Activated naive CD4-positive, alpha-beta T cell treated with anti-CD3 and anti-CD28 coated beads, Interleukin-2, amount 10 ng/mL, durations not matched to agents 7 days and 5 days (primary cell): ENCODE measurements at regions of chr3 and their contacts with region 1.

Region 1: DNA sequence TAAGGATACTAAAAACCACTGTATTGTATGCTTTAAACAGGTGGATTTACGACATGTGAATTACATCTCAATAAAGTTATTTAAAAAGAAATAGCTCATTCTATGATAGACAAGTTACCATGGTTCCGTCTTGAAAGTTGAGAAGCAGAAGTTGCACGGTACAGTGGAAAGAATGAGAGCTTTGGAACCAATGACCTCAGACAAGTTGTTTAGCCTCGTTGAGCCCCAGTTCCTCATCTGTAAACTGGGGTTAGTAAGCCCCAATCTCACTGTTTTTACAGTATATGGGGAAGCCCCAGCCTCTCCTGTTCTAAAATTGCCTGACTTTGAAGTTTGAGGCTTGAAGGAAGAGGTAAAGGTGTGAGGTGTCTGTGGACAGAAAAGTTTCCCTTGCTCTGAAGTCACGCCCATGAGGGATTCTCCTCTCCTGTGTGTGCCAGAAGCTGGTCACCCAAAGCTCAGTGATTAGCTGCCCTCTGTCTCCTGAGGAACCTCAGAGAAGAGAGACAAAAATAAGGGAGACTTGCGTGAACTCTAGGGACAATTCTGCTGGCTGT is 10.0 kb downstream of the CRYGS start:
- DNase-seq: peak; percentile 42
- H3K4me3 Mint-ChIP-seq: no peak overlapping the region
- H3K27ac Mint-ChIP-seq: peak overlapping the region; percentile 25
- H3K4me1 Mint-ChIP-seq: peaks cover 24% of the 10 kb centered on the region
- H3K27me3 Mint-ChIP-seq: peaks cover 7% of the 10 kb centered on the region

Region 2: GRCh38 chr3:186259612-186260383 is 274.4 kb before region 1 on chr3:
- CTCF ChIA-PET with region 1: interaction called, 107 read pairs
- DNase-seq: peak; percentile 73
- H3K4me3 Mint-ChIP-seq: no peak overlapping the region
- H3K27ac Mint-ChIP-seq: no peak overlapping the region
- H3K4me1 Mint-ChIP-seq: peaks cover 13% of the 10 kb centered on the region
- H3K27me3 Mint-ChIP-seq: peaks cover 12% of the 10 kb centered on the region

Region 3: GRCh38 chr3:186386883-186387560 is 147.2 kb before region 1 on chr3:
- CTCF ChIA-PET with region 1: no interaction called
- DNase-seq: no peak
- H3K4me3 Mint-ChIP-seq: no peak overlapping the region
- H3K27ac Mint-ChIP-seq: no peak overlapping the region
- H3K4me1 Mint-ChIP-seq: no peaks in the 10 kb centered on the region
- H3K27me3 Mint-ChIP-seq: no peaks in the 10 kb centered on the region

Region 4: GRCh38 chr3:186472456-186473008 is 61.7 kb before region 1 on chr3:
- CTCF ChIA-PET with region 1: no interaction called
- DNase-seq: no peak
- H3K4me3 Mint-ChIP-seq: no peak overlapping the region
- H3K27ac Mint-ChIP-seq: no peak overlapping the region
- H3K4me1 Mint-ChIP-seq: no peaks in the 10 kb centered on the region
- H3K27me3 Mint-ChIP-seq: peaks cover 10% of the 10 kb centered on the region